ENCODE measurements at regions of chr1 and their contacts with region 1.

Region 1: DNA sequence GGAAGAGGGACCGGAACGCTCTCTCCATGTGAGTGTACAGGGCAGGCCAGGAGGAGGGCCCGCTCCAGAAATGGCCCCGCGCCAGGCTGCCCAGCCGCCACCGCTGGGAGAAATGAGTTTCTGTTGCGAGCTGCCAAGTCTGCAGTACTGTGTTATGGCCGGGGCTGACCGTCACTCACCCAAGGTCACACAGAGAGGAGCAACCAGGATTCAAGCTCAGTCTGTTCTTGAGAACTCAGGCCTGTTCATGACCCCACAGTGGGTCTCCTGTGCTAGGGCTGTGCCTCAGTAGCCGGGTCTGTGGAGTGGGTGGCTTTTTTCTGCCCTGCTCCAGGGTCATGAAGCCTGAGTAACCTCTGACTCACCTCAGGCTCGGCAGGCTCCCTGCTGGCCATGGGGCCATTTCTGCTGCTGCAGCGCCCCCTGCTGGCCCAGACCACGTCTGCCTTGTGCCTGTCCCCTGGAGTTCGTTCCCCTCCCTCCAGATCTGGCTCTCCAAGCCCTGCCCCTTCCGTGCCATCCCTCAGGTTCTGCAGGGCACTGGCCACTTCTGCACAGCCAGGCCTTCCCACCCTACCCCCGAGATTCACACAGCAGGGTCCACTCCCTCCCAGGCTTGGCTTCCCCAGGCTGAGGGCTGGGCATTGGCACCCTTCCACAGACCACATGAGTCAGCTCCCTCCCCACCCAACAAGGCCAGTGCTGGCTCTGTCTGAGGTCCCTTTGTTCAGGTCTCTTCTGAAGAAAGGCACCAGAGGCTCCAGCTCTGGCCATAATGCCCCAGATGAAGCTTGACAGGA is 51.8 kb downstream of the EDN2 start:
- DNase-seq: peak in 3 of 4 donors; percentile 64 to 97 (median 90)
- ATAC-seq: peak; percentile 98
- H3K4me3 ChIP-seq: no peak overlapping the region
- H3K27ac ChIP-seq: peak overlapping the region; percentile 33 to 53
- H3K4me1 ChIP-seq: peaks cover 13 to 34% of the 10 kb centered on the region in 2 donors
- H3K27me3 ChIP-seq: peaks cover 0 to 31% of the 10 kb centered on the region in 2 donors
- CTCF ChIP-seq: peak; percentile 87 to 94

Region 2: GRCh38 chr1:41268154-41268770 is 164.4 kb before region 1 on chr1:
- intact Hi-C with region 1: loop called in 1 of 2 experiments (anchors 5 kb)
- DNase-seq: peak; percentile 63 to 93 (median 80)
- ATAC-seq: peak; percentile 97
- H3K4me3 ChIP-seq: no peak overlapping the region
- H3K27ac ChIP-seq: no peak overlapping the region
- H3K4me1 ChIP-seq: no peaks in the 10 kb centered on the region
- H3K27me3 ChIP-seq: no peaks in the 10 kb centered on the region
- CTCF ChIP-seq: peak; percentile 96 to 99

Region 3: DNA sequence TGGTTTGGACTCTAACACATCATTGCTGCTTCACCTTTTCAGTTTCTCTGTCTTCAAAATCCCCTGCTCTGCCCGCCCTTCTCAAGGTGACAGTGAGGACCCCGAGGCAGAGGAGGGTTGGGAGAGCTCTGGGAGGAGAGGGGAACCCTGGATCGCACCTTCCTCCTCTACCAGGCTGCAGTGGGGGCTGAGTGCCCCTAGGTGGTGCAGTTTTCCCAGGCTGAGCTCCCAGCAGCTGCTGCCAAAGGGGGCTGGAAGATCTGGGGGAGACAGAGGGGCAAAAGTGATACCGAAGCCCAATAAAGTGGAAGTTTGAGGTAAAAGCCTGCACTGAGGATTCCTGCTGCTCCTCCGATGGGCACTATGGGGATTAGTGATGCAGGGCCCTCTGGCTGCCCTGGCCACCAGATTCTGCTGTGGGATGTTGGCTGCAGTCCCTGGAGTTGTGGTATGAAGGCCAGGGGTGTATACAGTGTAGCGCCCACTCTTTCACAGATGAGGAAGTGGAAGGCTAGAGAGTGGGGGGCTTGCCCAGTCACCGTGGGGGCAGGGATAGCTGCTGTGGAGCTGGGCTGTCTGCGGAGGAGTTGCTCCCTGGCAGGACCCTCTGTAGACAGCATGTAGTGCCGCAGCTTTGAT is 149.9 kb before region 1 on chr1:
- intact Hi-C with region 1: loop called in 1 of 2 experiments (anchors 5 kb)
- DNase-seq: peak in 2 of 4 donors; percentile 16 to 40
- ATAC-seq: peak; percentile 71
- H3K4me3 ChIP-seq: no peak overlapping the region
- H3K27ac ChIP-seq: no peak overlapping the region
- H3K4me1 ChIP-seq: peaks cover 7 to 16% of the 10 kb centered on the region in 2 donors
- H3K27me3 ChIP-seq: peaks cover 0 to 48% of the 10 kb centered on the region in 2 donors
- CTCF ChIP-seq: peak; percentile 55 to 68

Region 4: DNA sequence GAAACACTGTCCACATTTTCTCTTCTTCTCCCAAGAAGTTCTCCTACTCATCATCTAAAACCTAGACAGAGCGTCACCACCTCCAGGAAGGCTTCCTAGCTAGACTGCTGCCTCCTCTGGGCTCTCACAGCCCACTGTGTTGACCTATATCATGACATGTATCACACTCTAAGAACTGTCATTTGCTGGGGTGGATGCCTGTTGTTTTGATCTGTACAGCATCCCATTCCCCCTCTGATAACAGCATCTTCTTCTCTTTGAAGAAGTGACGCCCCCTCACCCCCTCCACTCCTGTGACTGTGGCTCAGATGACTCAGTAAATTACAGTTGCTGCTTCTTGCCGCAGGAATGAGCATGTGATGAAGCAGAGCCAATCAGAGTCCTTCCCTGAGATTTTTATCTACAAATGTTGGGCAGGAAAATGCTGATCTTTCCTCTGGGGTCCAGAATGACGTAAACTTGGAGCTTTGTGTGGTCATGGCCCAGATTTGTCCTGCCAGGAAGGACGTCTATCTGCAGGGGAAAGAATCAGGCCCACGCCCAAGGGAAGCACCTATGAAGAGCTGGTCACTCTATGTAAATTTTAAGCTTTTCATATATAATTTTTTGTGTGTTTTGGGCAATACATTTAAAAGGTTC is 99.4 kb before region 1 on chr1:
- intact Hi-C with region 1: no loop called
- DNase-seq: no peak
- ATAC-seq: no peak
- H3K4me3 ChIP-seq: no peak overlapping the region
- H3K27ac ChIP-seq: no peak overlapping the region
- H3K4me1 ChIP-seq: no peaks in the 10 kb centered on the region
- H3K27me3 ChIP-seq: no peaks in the 10 kb centered on the region
- CTCF ChIP-seq: no peak